ENCODE measurements at regions of chr9 and their contacts with region 1.

Region 1: GRCh38 chr9:97890038-97890437 is 32.3 kb downstream of the TRMO start:
- DNase-seq: peak; percentile 72

Region 2: GRCh38 chr9:97900738-97901565 is 10.9 kb after region 1 on chr9:
- CTCF ChIA-PET with region 1: interaction called, 21 read pairs
- POLR2A ChIA-PET with region 1: no interaction called
- DNase-seq: peak; percentile 64